Ovary (tissue), 10 donors: ENCODE measurements at regions of chr16 and their contacts with region 1.

Region 1: DNA sequence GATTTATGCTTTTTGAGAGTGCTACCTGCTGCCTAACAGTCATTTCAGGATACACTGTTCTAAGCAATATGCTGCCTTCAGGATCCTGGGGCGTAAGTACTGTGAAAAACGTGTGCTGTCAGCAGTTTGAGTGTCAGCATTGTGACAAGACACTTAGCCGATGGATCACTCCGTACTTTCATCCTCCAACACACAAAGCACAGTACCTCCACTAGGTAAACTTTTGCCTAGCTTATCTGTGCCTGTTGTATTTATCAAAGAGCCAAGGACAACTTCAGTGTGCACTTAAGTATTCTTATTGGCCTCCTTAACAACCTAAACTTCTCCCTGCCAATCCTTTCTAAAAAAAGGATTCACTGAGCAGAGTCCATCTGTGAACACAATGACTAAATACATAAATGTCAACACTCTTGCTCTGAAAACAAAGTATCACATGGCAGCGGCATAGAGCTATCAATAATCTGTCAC is 33.8 kb upstream of the PHLPP2 start:
- DNase-seq: no peak
- H3K4me3 ChIP-seq: no peak overlapping the region
- H3K27ac ChIP-seq: no peak overlapping the region
- H3K4me1 ChIP-seq: no peaks in the 10 kb centered on the region
- H3K27me3 ChIP-seq: no peaks in the 10 kb centered on the region
- CTCF ChIP-seq: no peak
- EP300 ChIP-seq: no peak
- POLR2A ChIP-seq: no peak

Region 2: GRCh38 chr16:71288890-71289733 is 469.2 kb before region 1 on chr16 and contains the start of gene CMTR2:
- intact Hi-C with region 1: no loop called
- DNase-seq: peak; percentile 92 to 96 (median 93)
- H3K4me3 ChIP-seq: peak within 1 kb of the TSS; percentile 55
- H3K27ac ChIP-seq: peak within 1 kb of the TSS; percentile 60 to 78
- H3K4me1 ChIP-seq: peaks cover 4% of the 10 kb centered on the region
- H3K27me3 ChIP-seq: no peaks in the 10 kb centered on the region
- CTCF ChIP-seq: no peak
- EP300 ChIP-seq: no peak
- POLR2A ChIP-seq: peak; percentile 60
- total RNA-seq, gene CMTR2: 14.0 to 26.1 (median 18.4) TPM

Region 3: DNA sequence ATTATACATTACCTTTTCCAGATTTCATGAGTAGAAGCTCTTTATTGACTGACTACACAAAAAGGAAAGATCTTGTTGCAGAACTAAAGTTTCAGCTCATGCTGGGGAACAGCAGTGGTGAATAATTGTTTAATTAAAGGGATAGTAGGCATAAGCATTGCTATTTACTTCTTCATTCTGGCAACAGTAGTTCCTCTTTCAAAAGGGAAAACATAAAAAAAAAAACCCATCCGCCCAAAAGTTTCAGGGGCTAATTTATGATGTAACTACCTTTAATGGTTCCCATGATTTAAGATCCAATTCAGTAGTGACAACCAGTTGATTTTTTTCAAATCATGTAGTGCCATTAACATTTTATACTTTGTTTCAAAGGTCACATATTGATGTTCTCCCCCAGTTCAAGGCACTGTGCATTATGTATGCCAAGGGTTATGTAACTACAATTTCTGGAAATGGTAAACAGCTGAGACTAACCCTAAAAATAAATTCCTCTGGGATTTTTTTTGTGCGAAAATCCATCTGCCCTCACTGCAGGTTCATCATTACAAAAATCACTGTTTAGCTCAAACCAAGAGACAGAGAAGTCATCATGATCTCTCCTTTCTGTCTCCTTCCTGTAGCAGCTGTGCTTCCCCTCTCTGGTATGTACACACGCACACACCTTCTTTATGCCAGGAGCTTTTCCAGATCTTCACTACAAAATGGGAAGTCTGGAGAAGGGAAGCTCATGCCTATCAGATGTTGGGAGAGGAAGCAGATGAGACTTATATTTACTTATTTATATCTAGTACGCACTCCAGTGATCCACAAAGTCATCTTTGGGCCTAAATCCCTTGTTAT is 31.6 kb before region 1 on chr16:
- intact Hi-C with region 1: loop called in 1 of 4 experiments (anchors 1 kb)
- DNase-seq: no peak
- H3K4me3 ChIP-seq: no peak overlapping the region
- H3K27ac ChIP-seq: peak overlapping the region in 1 of 2 donors; percentile 3
- H3K4me1 ChIP-seq: peaks cover 4% of the 10 kb centered on the region
- H3K27me3 ChIP-seq: no peaks in the 10 kb centered on the region
- CTCF ChIP-seq: no peak
- EP300 ChIP-seq: no peak
- POLR2A ChIP-seq: no peak

Region 4: GRCh38 chr16:72590151-72590937 is 832.0 kb after region 1 on chr16:
- intact Hi-C with region 1: no loop called
- DNase-seq: no peak
- H3K4me3 ChIP-seq: no peak overlapping the region
- H3K27ac ChIP-seq: no peak overlapping the region
- H3K4me1 ChIP-seq: no peaks in the 10 kb centered on the region
- H3K27me3 ChIP-seq: no peaks in the 10 kb centered on the region
- CTCF ChIP-seq: no peak
- EP300 ChIP-seq: no peak
- POLR2A ChIP-seq: no peak